ENCODE measurements at regions of chr16 and their contacts with region 1.

Region 1: DNA sequence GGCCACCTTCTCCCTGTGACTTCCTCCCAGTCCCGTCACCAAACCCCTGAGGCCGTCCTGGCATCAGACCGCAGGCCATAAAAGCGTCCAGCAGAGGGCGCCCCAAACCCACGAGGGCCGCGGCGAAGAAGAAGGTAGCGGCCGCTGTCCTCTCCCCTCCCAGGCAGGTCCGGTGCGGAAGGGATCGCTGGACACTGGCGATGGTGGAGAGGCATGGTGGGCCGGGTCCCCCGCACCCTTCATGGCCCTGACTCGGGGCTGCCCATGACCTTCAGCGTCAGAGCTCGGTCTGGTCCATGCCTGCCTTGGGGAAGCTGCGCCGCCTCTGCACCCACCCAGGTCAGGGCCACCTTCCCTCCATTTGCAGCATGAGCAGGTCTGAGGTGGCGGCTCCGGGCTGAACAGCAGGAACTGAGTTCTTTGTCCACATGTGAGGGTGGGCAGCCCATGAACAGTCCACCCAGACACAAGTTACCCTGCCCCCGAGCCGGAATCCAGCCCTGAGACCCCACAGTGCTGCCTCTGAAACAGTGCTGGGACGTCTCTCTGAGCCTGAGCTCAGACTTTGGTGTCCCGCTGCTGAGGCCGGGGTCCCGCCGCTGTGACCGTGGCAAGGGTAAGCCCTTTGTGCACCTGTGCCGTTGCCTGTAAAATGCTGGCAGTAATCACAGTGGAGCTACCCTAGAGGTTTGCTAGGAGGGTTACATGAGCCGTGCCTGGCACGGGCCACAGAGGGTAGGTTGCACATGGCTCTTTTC is 40.8 kb upstream of the CMIP start:
- DNase-seq: peak; percentile 67 to 90 (median 82)
- ATAC-seq: peak; percentile 90
- H3K4me3 ChIP-seq: peak overlapping the region; percentile 35 to 39
- H3K4me3 Mint-ChIP-seq: no peak overlapping the region
- H3K27ac ChIP-seq: no peak overlapping the region
- H3K27ac Mint-ChIP-seq: no peak overlapping the region
- H3K4me1 ChIP-seq: peaks cover 8% of the 10 kb centered on the region
- H3K4me1 Mint-ChIP-seq: no peaks in the 10 kb centered on the region
- H3K27me3 ChIP-seq: no peaks in the 10 kb centered on the region
- H3K27me3 Mint-ChIP-seq: no peaks in the 10 kb centered on the region
- CTCF ChIP-seq: peak; percentile 88

Region 2: DNA sequence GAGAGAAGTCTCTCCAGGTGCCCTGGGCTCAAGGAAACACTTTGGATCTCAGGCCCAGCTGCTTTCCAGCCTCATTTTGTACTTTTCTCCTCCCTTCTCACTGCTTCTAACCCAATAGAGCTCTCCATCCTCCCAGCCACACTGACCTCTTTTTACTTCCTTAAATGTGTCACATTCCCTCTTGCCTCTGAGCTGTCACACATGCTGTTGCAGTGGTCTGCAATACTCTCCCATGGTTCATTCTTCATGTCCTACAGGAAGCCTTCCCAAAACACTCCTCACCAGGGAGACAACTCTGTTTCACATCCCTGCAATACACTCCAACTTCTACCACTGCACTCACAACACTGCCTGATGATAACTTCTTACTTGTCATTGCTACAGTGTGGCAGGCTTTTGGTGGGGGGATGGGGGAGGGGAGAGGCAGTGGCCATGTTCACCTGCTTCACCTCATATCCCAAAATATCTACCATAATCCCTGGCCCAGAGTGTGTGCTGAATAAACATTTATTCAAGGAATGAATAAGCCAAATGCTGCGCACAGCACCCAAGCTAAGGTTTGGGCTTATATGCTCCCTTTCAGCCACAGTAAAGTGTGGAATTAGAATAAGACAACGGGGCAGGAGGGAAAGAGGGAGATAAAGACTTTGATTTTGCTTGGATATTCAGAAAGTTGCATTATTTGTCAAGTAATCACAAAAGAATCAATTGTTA is 1105.0 kb before region 1 on chr16:
- CTCF ChIA-PET with region 1: no interaction called
- POLR2A ChIA-PET with region 1: no interaction called
- intact Hi-C with region 1: no loop called
- DNase-seq: no peak
- ATAC-seq: no peak
- H3K4me3 ChIP-seq: no peak overlapping the region
- H3K4me3 Mint-ChIP-seq: no peak overlapping the region
- H3K27ac ChIP-seq: no peak overlapping the region
- H3K27ac Mint-ChIP-seq: no peak overlapping the region
- H3K4me1 ChIP-seq: no peaks in the 10 kb centered on the region
- H3K4me1 Mint-ChIP-seq: no peaks in the 10 kb centered on the region
- H3K27me3 ChIP-seq: no peaks in the 10 kb centered on the region
- H3K27me3 Mint-ChIP-seq: peaks cover 3% of the 10 kb centered on the region
- CTCF ChIP-seq: no peak

Region 3: DNA sequence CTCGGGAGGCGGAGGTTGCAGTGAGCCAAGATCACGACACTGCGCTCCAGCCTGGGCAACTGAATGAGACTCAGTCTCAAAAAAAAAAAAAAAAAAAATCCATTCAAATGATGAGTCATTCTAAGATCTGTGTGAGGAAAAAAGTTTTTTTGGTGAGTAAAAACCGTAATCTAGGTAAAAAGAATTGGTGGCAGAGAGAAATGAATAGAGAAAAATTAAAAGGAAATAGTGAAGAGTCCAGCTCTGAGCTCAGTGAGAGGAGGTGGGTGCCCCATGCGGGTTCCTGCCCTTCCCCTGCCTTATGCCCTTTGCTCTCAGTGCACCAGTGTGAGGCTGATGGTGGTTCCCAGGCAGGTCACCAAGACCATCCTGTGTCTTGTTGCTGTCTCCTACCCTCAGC is 68.1 kb before region 1 on chr16:
- CTCF ChIA-PET with region 1: no interaction called
- POLR2A ChIA-PET with region 1: no interaction called
- intact Hi-C with region 1: no loop called
- DNase-seq: no peak
- ATAC-seq: no peak
- H3K4me3 ChIP-seq: no peak overlapping the region
- H3K4me3 Mint-ChIP-seq: no peak overlapping the region
- H3K27ac ChIP-seq: no peak overlapping the region
- H3K27ac Mint-ChIP-seq: no peak overlapping the region
- H3K4me1 ChIP-seq: no peaks in the 10 kb centered on the region
- H3K4me1 Mint-ChIP-seq: no peaks in the 10 kb centered on the region
- H3K27me3 ChIP-seq: no peaks in the 10 kb centered on the region
- H3K27me3 Mint-ChIP-seq: no peaks in the 10 kb centered on the region
- CTCF ChIP-seq: no peak

Region 4: DNA sequence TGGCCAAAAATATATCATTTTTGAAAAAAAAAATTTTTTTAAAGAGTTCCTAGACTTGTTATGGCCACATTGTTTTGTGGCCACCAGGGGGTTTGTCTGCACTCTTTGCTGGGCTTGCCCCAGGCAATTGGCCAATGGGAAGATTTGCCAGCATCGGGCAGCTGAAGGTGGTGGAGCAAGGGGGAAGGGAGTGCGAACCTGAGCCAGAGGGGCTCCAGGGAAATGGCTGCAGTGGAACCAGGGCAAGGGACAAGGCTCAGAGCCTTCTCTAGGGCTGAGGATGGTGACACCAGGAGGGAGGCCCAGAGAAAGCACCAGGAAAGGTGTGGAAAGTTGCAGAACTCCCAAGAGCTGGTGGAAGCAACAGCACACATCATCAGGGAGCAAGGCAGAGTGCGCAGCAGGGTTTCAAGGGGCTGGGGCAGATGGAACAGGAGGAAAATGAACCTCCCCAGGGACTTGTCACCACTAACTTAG is 25.3 kb after region 1 on chr16:
- CTCF ChIA-PET with region 1: interaction called, 10 read pairs
- POLR2A ChIA-PET with region 1: no interaction called
- intact Hi-C with region 1: no loop called
- DNase-seq: peak in 3 of 9 experiments; percentile 32 to 62 (median 46)
- ATAC-seq: peak; percentile 36
- H3K4me3 ChIP-seq: no peak overlapping the region
- H3K4me3 Mint-ChIP-seq: no peak overlapping the region
- H3K27ac ChIP-seq: no peak overlapping the region
- H3K27ac Mint-ChIP-seq: no peak overlapping the region
- H3K4me1 ChIP-seq: peaks cover 5% of the 10 kb centered on the region
- H3K4me1 Mint-ChIP-seq: peaks cover 11% of the 10 kb centered on the region
- H3K27me3 ChIP-seq: no peaks in the 10 kb centered on the region
- H3K27me3 Mint-ChIP-seq: peaks cover 2% of the 10 kb centered on the region
- CTCF ChIP-seq: no peak

Region 5: GRCh38 chr16:81469710-81470535 is 66.1 kb after region 1 on chr16:
- CTCF ChIA-PET with region 1: interaction called, 3 read pairs
- POLR2A ChIA-PET with region 1: no interaction called
- intact Hi-C with region 1: loop called in 1 of 2 experiments (anchors 5 kb)
- DNase-seq: peak in 7 of 9 experiments; percentile 19 to 80 (median 47)
- ATAC-seq: peak; percentile 88
- H3K4me3 ChIP-seq: peak overlapping the region; percentile 28 to 36
- H3K4me3 Mint-ChIP-seq: peak overlapping the region; percentile 64
- H3K27ac ChIP-seq: peak overlapping the region; percentile 43 to 73
- H3K27ac Mint-ChIP-seq: peak overlapping the region; percentile 91
- H3K4me1 ChIP-seq: peaks cover 67% of the 10 kb centered on the region
- H3K4me1 Mint-ChIP-seq: peaks cover 77% of the 10 kb centered on the region
- H3K27me3 ChIP-seq: no peaks in the 10 kb centered on the region
- H3K27me3 Mint-ChIP-seq: no peaks in the 10 kb centered on the region
- CTCF ChIP-seq: no peak

Region 6: GRCh38 chr16:81513204-81514040 is 109.6 kb after region 1 on chr16:
- CTCF ChIA-PET with region 1: no interaction called
- POLR2A ChIA-PET with region 1: no interaction called
- intact Hi-C with region 1: no loop called
- DNase-seq: peak in 2 of 9 experiments; percentile 19 to 39
- ATAC-seq: no peak
- H3K4me3 ChIP-seq: no peak overlapping the region
- H3K4me3 Mint-ChIP-seq: no peak overlapping the region
- H3K27ac ChIP-seq: peak overlapping the region in 1 of 2 experiments; percentile 41
- H3K27ac Mint-ChIP-seq: peak overlapping the region; percentile 45
- H3K4me1 ChIP-seq: no peaks in the 10 kb centered on the region
- H3K4me1 Mint-ChIP-seq: peaks cover 14% of the 10 kb centered on the region
- H3K27me3 ChIP-seq: no peaks in the 10 kb centered on the region
- H3K27me3 Mint-ChIP-seq: no peaks in the 10 kb centered on the region
- CTCF ChIP-seq: no peak

Region 7: GRCh38 chr16:81585785-81586184 is 182.0 kb after region 1 on chr16:
- CTCF ChIA-PET with region 1: no interaction called
- POLR2A ChIA-PET with region 1: no interaction called
- intact Hi-C with region 1: loop called in 1 of 2 experiments (anchors 1 kb)
- DNase-seq: no peak
- ATAC-seq: no peak
- H3K4me3 ChIP-seq: no peak overlapping the region
- H3K4me3 Mint-ChIP-seq: no peak overlapping the region
- H3K27ac ChIP-seq: no peak overlapping the region
- H3K27ac Mint-ChIP-seq: no peak overlapping the region
- H3K4me1 ChIP-seq: no peaks in the 10 kb centered on the region
- H3K4me1 Mint-ChIP-seq: peaks cover 16% of the 10 kb centered on the region
- H3K27me3 ChIP-seq: no peaks in the 10 kb centered on the region
- H3K27me3 Mint-ChIP-seq: no peaks in the 10 kb centered on the region
- CTCF ChIP-seq: no peak

Region 8: DNA sequence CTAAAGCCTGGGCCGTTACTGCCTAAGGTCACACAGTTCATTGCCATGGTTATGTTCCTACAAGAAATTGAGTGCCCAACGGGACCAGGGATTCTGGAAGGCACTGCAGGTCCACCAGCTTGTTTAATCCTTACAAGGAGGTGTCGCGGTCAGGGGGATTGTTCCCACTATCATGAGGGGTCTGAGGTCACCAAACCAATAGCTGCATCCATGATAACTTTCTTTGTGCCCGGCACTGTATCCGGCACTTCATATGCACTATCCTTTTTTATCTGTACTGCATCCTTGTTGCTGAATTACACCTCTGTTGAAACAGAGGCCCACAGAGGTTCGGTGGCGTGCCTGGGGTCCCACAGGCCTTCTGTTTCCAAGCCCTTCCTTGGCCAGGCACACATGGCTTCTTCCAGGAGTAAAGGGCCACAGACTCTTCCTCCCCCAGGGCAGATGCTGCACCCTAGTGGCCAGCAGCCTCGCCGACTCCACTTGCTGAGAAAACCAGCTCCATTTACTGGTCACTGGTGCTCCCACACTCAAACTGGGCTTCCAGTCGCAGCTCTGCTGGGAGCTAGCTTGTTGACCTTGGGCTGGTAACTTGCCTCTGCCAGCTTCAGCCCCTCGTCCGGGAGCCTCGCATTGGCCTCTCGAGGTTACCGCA is 293.3 kb after region 1 on chr16:
- CTCF ChIA-PET with region 1: interaction called, 23 read pairs
- POLR2A ChIA-PET with region 1: no interaction called
- intact Hi-C with region 1: loop called (anchors 1 kb)
- DNase-seq: peak in 8 of 9 experiments; percentile 24 to 70 (median 48)
- ATAC-seq: peak; percentile 58
- H3K4me3 ChIP-seq: no peak overlapping the region
- H3K4me3 Mint-ChIP-seq: no peak overlapping the region
- H3K27ac ChIP-seq: no peak overlapping the region
- H3K27ac Mint-ChIP-seq: peak overlapping the region; percentile 27
- H3K4me1 ChIP-seq: no peaks in the 10 kb centered on the region
- H3K4me1 Mint-ChIP-seq: no peaks in the 10 kb centered on the region
- H3K27me3 ChIP-seq: no peaks in the 10 kb centered on the region
- H3K27me3 Mint-ChIP-seq: no peaks in the 10 kb centered on the region
- CTCF ChIP-seq: peak; percentile 35

Region 9: GRCh38 chr16:81723098-81723723 is 319.4 kb after region 1 on chr16:
- CTCF ChIA-PET with region 1: interaction called, 34 read pairs
- POLR2A ChIA-PET with region 1: interaction called, 4 read pairs
- intact Hi-C with region 1: loop called (anchors 1 kb)
- DNase-seq: peak in 6 of 9 experiments; percentile 27 to 87 (median 58)
- ATAC-seq: peak; percentile 68
- H3K4me3 ChIP-seq: no peak overlapping the region
- H3K4me3 Mint-ChIP-seq: no peak overlapping the region
- H3K27ac ChIP-seq: no peak overlapping the region
- H3K27ac Mint-ChIP-seq: no peak overlapping the region
- H3K4me1 ChIP-seq: peaks cover 6% of the 10 kb centered on the region
- H3K4me1 Mint-ChIP-seq: peaks cover 15% of the 10 kb centered on the region
- H3K27me3 ChIP-seq: no peaks in the 10 kb centered on the region
- H3K27me3 Mint-ChIP-seq: no peaks in the 10 kb centered on the region
- CTCF ChIP-seq: peak; percentile 76

Measured in CD8-positive, alpha-beta T cell (primary cell).